RWPE1 (cell line): ENCODE measurements at regions of chr2 and their contacts with region 1.

Region 1: DNA sequence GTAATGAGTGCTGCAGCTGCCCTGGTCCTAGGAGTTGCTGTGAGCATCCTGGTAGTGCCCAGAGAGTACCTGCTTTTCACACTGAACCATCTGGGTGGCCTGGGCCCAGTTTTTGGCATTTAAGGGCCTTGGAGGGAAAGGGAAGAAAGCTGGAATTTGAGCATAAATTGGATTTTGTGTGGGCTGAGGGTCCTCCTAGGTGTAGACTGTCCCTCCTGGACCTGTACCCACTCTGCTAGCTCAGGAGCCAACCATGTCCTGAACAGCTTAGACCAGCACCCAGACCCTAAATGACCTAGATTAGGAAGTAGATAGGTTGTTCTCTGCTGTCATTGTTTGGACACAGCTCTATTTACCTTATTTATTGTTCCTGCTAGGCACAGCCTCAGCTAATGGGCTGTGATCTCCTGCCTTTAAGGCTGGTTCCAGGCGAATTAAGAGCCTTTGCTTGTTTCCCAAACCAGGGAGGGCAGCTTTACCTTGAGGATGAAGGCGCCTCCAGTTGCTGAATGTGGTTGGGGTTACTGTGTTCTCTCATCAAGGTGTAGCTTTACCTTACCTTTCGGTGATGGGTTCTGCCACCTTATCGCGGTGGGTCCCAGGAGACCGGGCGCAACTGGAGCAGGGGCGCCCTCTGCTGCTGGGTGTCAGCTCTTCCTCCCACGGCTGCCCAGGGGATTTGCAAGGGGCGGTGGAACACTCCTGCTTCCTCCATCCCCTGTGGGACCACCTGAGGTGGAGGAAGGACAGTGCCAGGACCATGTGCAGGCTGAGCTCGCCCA is 34.4 kb downstream of the ITGA6 start:
- DNase-seq: peak; percentile 38
- H3K27ac ChIP-seq: peak overlapping the region; percentile 81
- CTCF ChIP-seq: peak; percentile 81

Region 2: DNA sequence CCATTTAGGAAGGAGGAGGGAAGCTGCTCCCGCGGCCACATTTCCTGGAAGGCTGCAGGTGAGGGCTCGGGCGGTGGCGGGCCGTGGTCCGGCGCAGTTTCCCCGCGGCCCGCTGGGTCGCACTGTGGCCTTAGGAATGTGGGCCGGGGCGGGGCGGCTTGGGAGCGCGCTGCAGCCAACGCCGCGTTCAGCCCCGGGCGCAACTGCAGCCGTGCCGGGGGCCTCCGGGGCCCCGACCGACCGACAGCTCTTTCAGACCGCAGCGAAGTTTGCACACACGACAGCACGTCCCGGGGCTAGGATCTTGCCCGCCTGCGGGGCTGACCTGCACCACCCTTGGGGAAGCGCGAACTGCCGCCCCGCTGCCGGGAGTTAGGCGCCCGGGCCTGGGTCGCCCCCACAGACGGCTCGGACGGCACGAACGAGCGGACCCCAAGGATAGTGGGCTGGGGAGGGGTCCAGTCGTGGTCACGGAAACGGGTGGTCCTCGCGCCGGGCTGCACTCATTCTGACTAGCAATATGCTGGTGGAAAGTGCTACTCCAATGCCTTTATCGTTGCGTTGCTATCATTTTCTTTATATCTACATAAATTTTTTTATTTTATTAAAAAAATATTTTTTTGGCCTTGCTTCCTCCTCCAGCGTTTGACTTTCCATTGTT is 289.1 kb before region 1 on chr2:
- CTCF ChIA-PET with region 1: interaction called, 23 read pairs
- POLR2A ChIA-PET with region 1: no interaction called
- DNase-seq: peak; percentile 82
- H3K27ac ChIP-seq: peak overlapping the region; percentile 84
- CTCF ChIP-seq: peak; percentile 89

Region 3: DNA sequence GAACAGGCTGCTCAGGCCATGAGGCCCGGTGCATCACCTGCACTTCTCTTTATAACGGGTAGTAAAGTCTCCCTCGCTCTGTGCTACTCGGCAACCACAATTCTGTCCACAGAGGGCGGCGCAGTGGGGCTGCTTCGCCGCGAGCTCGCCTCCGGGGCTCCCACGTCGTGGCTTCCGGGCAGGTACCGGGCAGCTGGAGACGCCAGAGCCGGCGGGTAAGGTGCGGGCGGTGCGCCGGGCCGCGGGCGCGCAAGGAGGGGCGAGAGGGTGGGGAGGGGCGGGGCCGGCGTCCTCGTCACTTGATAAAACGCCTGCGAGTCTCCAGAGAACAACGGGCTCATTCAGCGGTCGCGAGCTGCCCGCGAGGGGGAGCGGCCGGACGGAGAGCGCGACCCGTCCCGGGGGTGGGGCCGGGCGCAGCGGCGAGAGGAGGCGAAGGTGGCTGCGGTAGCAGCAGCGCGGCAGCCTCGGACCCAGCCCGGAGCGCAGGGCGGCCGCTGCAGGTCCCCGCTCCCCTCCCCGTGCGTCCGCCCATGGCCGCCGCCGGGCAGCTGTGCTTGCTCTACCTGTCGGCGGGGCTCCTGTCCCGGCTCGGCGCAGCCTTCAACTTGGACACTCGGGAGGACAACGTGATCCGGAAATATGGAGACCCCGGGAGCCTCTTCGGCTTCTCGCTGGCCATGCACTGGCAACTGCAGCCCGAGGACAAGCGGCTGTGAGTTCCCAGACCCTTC is 34.4 kb before region 1 on chr2 and contains the start of gene ITGA6:
- CTCF ChIA-PET with region 1: interaction called, 24 read pairs
- POLR2A ChIA-PET with region 1: interaction called, 5 read pairs
- DNase-seq: peak; percentile 80
- H3K27ac ChIP-seq: peak within 1 kb of the TSS; percentile 94
- CTCF ChIP-seq: no peak

Region 4: DNA sequence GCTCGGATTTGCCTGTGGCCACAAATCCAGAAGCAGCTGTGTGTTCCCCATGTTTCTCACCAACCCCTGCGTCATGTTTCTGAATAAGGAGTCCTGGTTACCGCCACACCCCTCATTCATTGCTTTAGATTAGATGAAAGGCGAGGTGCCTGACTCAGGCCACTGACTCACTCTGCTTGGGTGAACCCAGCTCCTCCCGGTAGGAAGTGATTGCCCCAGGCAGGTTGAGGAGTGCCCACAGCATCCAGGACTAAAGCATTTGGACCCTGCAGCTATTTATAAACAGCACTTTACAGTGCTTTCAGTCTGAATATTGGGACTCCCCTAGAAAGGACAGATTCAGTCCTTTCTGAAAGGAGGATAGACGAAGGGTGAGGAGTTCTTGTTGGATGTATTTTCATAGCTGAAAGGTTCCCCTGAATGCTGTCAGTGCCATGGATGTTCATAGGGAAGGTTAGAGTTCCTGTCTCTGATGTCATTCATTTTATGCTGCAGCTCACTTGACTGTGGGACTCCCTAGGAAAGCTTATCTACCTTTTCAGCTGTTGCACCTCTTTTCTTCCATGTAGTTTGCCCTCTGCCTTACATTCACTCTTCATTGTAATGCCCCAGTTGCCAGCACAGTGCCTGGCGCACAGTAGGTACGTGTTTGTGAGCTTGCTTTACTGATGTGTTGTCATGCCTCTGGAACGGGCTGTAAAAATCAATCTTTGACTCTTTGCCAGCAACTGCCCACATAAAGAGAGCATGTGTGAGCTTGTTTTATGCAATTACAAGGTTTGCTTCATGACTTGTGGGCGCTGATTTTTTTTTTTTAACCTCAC is 19.5 kb before region 1 on chr2:
- CTCF ChIA-PET with region 1: interaction called, 11 read pairs
- POLR2A ChIA-PET with region 1: no interaction called
- DNase-seq: peak; percentile 96
- H3K27ac ChIP-seq: peak overlapping the region; percentile 73
- CTCF ChIP-seq: no peak

Region 5: GRCh38 chr2:172473167-172473566 is 11.4 kb after region 1 on chr2:
- CTCF ChIA-PET with region 1: no interaction called
- POLR2A ChIA-PET with region 1: no interaction called
- DNase-seq: no peak
- H3K27ac ChIP-seq: no peak overlapping the region
- CTCF ChIP-seq: no peak